Left ventricle myocardium inferior (tissue), 1 donor: ENCODE measurements at regions of chr14 and their contacts with region 1.

Region 1: GRCh38 chr14:73503648-73504047 is 12.9 kb downstream of the RIOX1 start:
- DNase-seq: no peak
- H3K4me3 ChIP-seq: no peak overlapping the region
- H3K27ac ChIP-seq: no peak overlapping the region
- H3K4me1 ChIP-seq: no peaks in the 10 kb centered on the region
- H3K27me3 ChIP-seq: no peaks in the 10 kb centered on the region
- CTCF ChIP-seq: no peak

Region 2: DNA sequence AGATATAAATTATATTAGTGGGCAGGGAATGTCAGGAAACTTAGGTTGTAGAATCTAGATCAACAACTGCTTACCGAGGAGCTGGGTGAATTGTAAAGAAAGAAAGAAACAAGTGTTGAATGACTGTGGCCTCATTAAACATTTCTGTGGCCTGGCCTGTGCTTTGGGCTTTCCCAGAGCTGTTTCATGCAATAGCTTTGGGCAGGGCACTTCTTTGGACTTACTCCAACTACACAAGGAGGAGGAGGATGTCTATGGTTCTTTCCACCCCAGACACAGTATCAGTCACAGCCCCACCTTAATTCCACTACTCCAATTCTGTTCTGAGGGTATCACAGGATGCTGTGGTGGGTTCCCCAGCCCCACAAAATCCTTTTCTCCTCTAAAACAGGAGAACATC is 647.7 kb before region 1 on chr14:
- intact Hi-C with region 1: no loop called
- DNase-seq: no peak
- H3K4me3 ChIP-seq: no peak overlapping the region
- H3K27ac ChIP-seq: no peak overlapping the region
- H3K4me1 ChIP-seq: peaks cover 63% of the 10 kb centered on the region
- H3K27me3 ChIP-seq: no peaks in the 10 kb centered on the region
- CTCF ChIP-seq: no peak

Region 3: GRCh38 chr14:73633116-73634010 is 129.7 kb after region 1 on chr14:
- intact Hi-C with region 1: loop called (anchors 10 kb)
- DNase-seq: peak; percentile 37
- H3K4me3 ChIP-seq: peak overlapping the region; percentile 76
- H3K27ac ChIP-seq: peak overlapping the region; percentile 75
- H3K4me1 ChIP-seq: peaks cover 18% of the 10 kb centered on the region
- H3K27me3 ChIP-seq: no peaks in the 10 kb centered on the region
- CTCF ChIP-seq: peak; percentile 90